Naive thymus-derived CD4-positive, alpha-beta T cell (primary cell): ENCODE measurements at regions of chr10 and their contacts with region 1.

Region 1: GRCh38 chr10:97498076-97498840 is at the start of gene MMS19:
- DNase-seq: peak; percentile 99 to 100 (median 100)
- ATAC-seq: peak; percentile 89
- H3K4me3 ChIP-seq: peak within 1 kb of the TSS; percentile 96
- H3K4me3 Mint-ChIP-seq: peak within 1 kb of the TSS; percentile 85 to 99 (median 98)
- H3K27ac ChIP-seq: peak within 1 kb of the TSS; percentile 81
- H3K27ac Mint-ChIP-seq: peak within 1 kb of the TSS; percentile 94 to 98 (median 97)
- H3K4me1 ChIP-seq: peaks cover 20 to 41% of the 10 kb centered on the region in 2 donors
- H3K4me1 Mint-ChIP-seq: peaks cover 28 to 65% (median 49%) of the 10 kb centered on the region in 7 donors
- H3K27me3 ChIP-seq: no peaks in the 10 kb centered on the region
- H3K27me3 Mint-ChIP-seq: peaks cover 0 to 34% (median 21%) of the 10 kb centered on the region in 5 donors
- total RNA-seq, gene MMS19: 68.7 to 113 (median 87.9) TPM

Region 2: GRCh38 chr10:97318772-97319651 is 179.2 kb before region 1 on chr10 and contains the start of gene FRAT1:
- CTCF ChIA-PET with region 1: no interaction called
- POLR2A ChIA-PET with region 1: interaction called, 4 read pairs
- intact Hi-C with region 1: loop called in 1 of 2 experiments (anchors 1 kb)
- DNase-seq: peak; percentile 87 to 99 (median 95)
- ATAC-seq: peak; percentile 87
- H3K4me3 ChIP-seq: peak within 1 kb of the TSS; percentile 92
- H3K4me3 Mint-ChIP-seq: peak within 1 kb of the TSS; percentile 92 to 99 (median 94)
- H3K27ac ChIP-seq: peak within 1 kb of the TSS; percentile 100
- H3K27ac Mint-ChIP-seq: peak within 1 kb of the TSS; percentile 99 to 100 (median 99)
- H3K4me1 ChIP-seq: peaks cover 12 to 18% of the 10 kb centered on the region in 2 donors
- H3K4me1 Mint-ChIP-seq: peaks cover 20 to 40% (median 29%) of the 10 kb centered on the region in 7 donors
- H3K27me3 ChIP-seq: no peaks in the 10 kb centered on the region
- H3K27me3 Mint-ChIP-seq: peaks cover 0 to 20% (median 0%) of the 10 kb centered on the region in 5 donors
- total RNA-seq, gene FRAT1: 5.3 to 41.0 (median 21.8) TPM

Region 3: GRCh38 chr10:97425964-97426775 is 72.1 kb before region 1 on chr10 and contains the start of gene PGAM1:
- CTCF ChIA-PET with region 1: no interaction called
- POLR2A ChIA-PET with region 1: interaction called, 5 read pairs
- intact Hi-C with region 1: loop called (anchors 1 kb)
- DNase-seq: peak; percentile 93 to 98 (median 97)
- ATAC-seq: peak; percentile 91
- H3K4me3 ChIP-seq: peak within 1 kb of the TSS; percentile 92
- H3K4me3 Mint-ChIP-seq: peak within 1 kb of the TSS; percentile 83 to 97 (median 95)
- H3K27ac ChIP-seq: peak within 1 kb of the TSS; percentile 87
- H3K27ac Mint-ChIP-seq: peak within 1 kb of the TSS; percentile 77 to 99 (median 95)
- H3K4me1 ChIP-seq: peaks cover 20 to 29% of the 10 kb centered on the region in 2 donors
- H3K4me1 Mint-ChIP-seq: peaks cover 10 to 53% (median 34%) of the 10 kb centered on the region in 7 donors
- H3K27me3 ChIP-seq: no peaks in the 10 kb centered on the region
- H3K27me3 Mint-ChIP-seq: peaks cover 0 to 2% (median 0%) of the 10 kb centered on the region in 5 donors
- total RNA-seq, gene PGAM1: 58.5 to 536 (median 69.8) TPM

Region 4: GRCh38 chr10:97483506-97483905 is 14.8 kb before region 1 on chr10:
- CTCF ChIA-PET with region 1: no interaction called
- POLR2A ChIA-PET with region 1: no interaction called
- intact Hi-C with region 1: loop called in 1 of 2 experiments (anchors 2 kb)
- DNase-seq: no peak
- ATAC-seq: no peak
- H3K4me3 ChIP-seq: no peak overlapping the region
- H3K4me3 Mint-ChIP-seq: no peak overlapping the region
- H3K27ac ChIP-seq: no peak overlapping the region
- H3K27ac Mint-ChIP-seq: peak overlapping the region in 2 of 9 donors; percentile 62
- H3K4me1 ChIP-seq: no peaks in the 10 kb centered on the region
- H3K4me1 Mint-ChIP-seq: peaks cover 1 to 22% (median 14%) of the 10 kb centered on the region in 7 donors
- H3K27me3 ChIP-seq: no peaks in the 10 kb centered on the region
- H3K27me3 Mint-ChIP-seq: no peaks in the 10 kb centered on the region

Region 5: GRCh38 chr10:97640174-97640867 is 142.1 kb after region 1 on chr10 and contains the start of gene PI4K2A:
- CTCF ChIA-PET with region 1: no interaction called
- POLR2A ChIA-PET with region 1: no interaction called
- intact Hi-C with region 1: loop called (anchors 1 kb)
- DNase-seq: peak; percentile 89 to 99 (median 98)
- ATAC-seq: peak; percentile 98
- H3K4me3 ChIP-seq: peak within 1 kb of the TSS; percentile 82
- H3K4me3 Mint-ChIP-seq: peak within 1 kb of the TSS; percentile 64 to 99 (median 94)
- H3K27ac ChIP-seq: peak within 1 kb of the TSS; percentile 70
- H3K27ac Mint-ChIP-seq: peak within 1 kb of the TSS; percentile 69 to 94 (median 89)
- H3K4me1 ChIP-seq: peaks cover 4 to 15% of the 10 kb centered on the region in 2 donors
- H3K4me1 Mint-ChIP-seq: peaks cover 10 to 34% (median 26%) of the 10 kb centered on the region in 7 donors
- H3K27me3 ChIP-seq: no peaks in the 10 kb centered on the region
- H3K27me3 Mint-ChIP-seq: no peaks in the 10 kb centered on the region
- total RNA-seq, gene PI4K2A: 9.0 to 33.8 (median 11.0) TPM

Region 6: DNA sequence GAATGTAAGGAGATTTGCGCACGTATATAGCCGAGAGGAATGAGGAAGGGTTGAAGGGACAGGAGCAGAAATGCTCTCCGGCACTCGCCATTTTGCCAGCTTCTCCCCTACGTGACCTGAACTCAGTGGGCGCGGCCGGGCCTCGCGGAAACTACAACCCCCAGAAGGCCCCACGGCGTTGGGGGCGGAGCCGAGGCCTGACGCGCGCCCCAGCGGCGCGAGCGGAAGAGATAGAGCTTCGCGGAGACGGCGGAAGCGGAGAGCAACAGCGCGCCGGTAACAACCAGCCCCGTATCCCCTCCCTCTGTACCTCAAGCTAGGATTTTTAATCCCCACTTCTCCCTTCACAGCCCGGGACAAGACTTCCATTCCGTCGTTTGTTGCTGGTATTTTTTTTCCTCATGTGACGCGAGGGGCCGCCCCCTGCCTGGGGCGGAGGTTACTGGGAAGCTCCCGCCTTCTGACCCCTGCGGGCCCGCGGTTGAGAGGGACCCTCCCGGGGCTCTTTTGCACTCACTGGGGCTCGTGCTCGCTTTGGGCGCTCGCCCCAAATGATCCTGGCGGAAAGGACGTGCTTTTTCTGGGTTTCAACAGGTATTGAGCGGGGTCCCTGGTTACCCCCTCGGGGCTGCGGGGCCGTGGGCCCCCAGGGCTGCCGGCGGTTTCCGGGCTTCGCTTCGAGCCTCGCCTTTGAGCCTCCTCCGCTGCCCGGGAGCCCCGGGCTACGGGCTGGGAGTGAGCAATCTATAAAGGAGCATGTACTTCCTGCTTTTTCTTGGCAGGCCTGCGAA is 636.4 kb after region 1 on chr10 and contains the start of gene R3HCC1L:
- CTCF ChIA-PET with region 1: no interaction called
- POLR2A ChIA-PET with region 1: no interaction called
- intact Hi-C with region 1: loop called (anchors 1 to 2 kb)
- DNase-seq: peak; percentile 87 to 95 (median 93)
- ATAC-seq: peak; percentile 98
- H3K4me3 ChIP-seq: peak within 1 kb of the TSS; percentile 91
- H3K4me3 Mint-ChIP-seq: peak within 1 kb of the TSS; percentile 78 to 95 (median 86)
- H3K27ac ChIP-seq: peak within 1 kb of the TSS; percentile 96
- H3K27ac Mint-ChIP-seq: peak within 1 kb of the TSS; percentile 71 to 98 (median 96)
- H3K4me1 ChIP-seq: peaks cover 23 to 27% of the 10 kb centered on the region in 2 donors
- H3K4me1 Mint-ChIP-seq: peaks cover 0 to 53% (median 44%) of the 10 kb centered on the region in 7 donors
- H3K27me3 ChIP-seq: no peaks in the 10 kb centered on the region
- H3K27me3 Mint-ChIP-seq: peaks cover 0 to 2% (median 0%) of the 10 kb centered on the region in 5 donors
- total RNA-seq, gene R3HCC1L: 17.6 to 25.3 (median 20.4) TPM